ENCODE measurements at regions of chr2 and their contacts with region 1.

Region 1: DNA sequence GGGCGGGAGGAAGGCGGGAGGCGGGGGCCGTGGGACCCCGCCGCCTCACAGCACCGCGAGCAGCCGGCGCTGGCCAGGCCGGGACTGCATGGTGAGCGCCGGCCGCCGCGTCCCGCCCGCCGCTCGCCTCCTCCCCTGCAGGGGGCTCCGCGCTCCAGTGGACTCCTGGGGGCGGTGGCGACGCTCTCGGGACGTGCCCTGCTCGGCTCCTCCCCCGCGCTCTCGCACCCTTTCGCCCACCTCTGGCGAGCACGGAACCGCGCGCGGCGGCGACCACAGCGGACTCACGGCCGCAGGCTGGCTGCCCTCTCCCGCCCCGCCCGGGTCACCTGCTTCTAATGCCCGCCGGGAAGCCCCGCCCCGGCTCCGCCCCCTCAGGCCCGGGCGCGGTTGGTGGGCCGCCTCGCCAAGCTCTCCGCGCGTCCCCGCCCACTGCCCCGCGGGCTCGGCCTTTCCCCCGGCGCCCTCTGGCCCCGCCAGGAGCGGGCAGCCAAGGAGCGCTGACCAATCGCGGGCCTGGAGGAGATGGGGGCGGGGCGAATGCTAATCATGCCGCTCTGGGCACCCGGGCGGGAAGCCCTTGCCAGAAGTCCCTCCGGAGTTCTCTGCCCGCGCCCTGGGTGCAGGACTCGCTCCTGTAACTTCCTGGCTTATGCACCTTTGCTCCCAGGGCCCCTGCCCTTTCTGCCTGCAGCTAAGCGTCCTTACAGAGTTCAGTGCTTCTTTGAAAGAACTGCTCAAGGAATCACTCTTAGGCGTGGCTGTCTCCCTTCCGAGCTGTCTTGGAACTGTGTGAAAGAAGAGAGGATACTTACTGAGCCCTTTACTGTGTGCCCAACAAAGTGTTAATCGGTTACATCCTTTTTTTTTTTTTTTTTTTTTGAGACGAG is at the start of gene FZD5:
- DNase-seq: peak; percentile 96 to 98
- ATAC-seq: peak; percentile 93 to 96 (median 94)
- H3K4me3 ChIP-seq: peak within 1 kb of the TSS; percentile 93
- H3K27ac ChIP-seq: peak within 1 kb of the TSS; percentile 86
- H3K4me1 ChIP-seq: peaks cover 7% of the 10 kb centered on the region
- H3K27me3 ChIP-seq: no peaks in the 10 kb centered on the region
- CTCF ChIP-seq: peak; percentile 58
- total RNA-seq, gene FZD5: 2.5 to 3.5 (median 2.7) TPM

Region 2: GRCh38 chr2:207474863-207475485 is 294.9 kb before region 1 on chr2:
- intact Hi-C with region 1: no loop called
- DNase-seq: no peak
- ATAC-seq: peak in 3 of 4 donors; percentile 48 to 73 (median 57)
- H3K4me3 ChIP-seq: no peak overlapping the region
- H3K27ac ChIP-seq: no peak overlapping the region
- H3K4me1 ChIP-seq: no peaks in the 10 kb centered on the region
- H3K27me3 ChIP-seq: no peaks in the 10 kb centered on the region
- CTCF ChIP-seq: peak; percentile 83

Region 3: GRCh38 chr2:207974216-207974605 is 204.4 kb after region 1 on chr2:
- intact Hi-C with region 1: loop called in 1 of 2 experiments (anchors 5 kb)
- DNase-seq: no peak
- ATAC-seq: no peak
- H3K4me3 ChIP-seq: no peak overlapping the region
- H3K27ac ChIP-seq: no peak overlapping the region
- H3K4me1 ChIP-seq: peaks cover 8% of the 10 kb centered on the region
- H3K27me3 ChIP-seq: no peaks in the 10 kb centered on the region
- CTCF ChIP-seq: no peak

Region 4: GRCh38 chr2:208025037-208025813 is 255.4 kb after region 1 on chr2 and contains the start of gene PLEKHM3:
- intact Hi-C with region 1: loop called (anchors 5 kb)
- DNase-seq: peak; percentile 87 to 92
- ATAC-seq: peak; percentile 97 to 100 (median 99)
- H3K4me3 ChIP-seq: peak within 1 kb of the TSS; percentile 78
- H3K27ac ChIP-seq: peak within 1 kb of the TSS; percentile 82
- H3K4me1 ChIP-seq: peaks cover 3% of the 10 kb centered on the region
- H3K27me3 ChIP-seq: no peaks in the 10 kb centered on the region
- CTCF ChIP-seq: no peak
- total RNA-seq, gene PLEKHM3: 2.2 to 5.7 (median 4.7) TPM